Adrenal gland (tissue), 19 donors: ENCODE measurements at regions of chr3 and their contacts with region 1.

Region 1: GRCh38 chr3:190120269-190121060 is at the start of gene P3H2:
- DNase-seq: peak; percentile 88 to 94 (median 92)
- H3K4me3 ChIP-seq: peak within 1 kb of the TSS; percentile 9 to 94 (median 42)
- H3K27ac ChIP-seq: peak within 1 kb of the TSS; percentile 41 to 94 (median 88)
- H3K4me1 ChIP-seq: peaks cover 23 to 44% of the 10 kb centered on the region in 2 donors
- H3K27me3 ChIP-seq: no peaks in the 10 kb centered on the region
- CTCF ChIP-seq: peak; percentile 42 to 70 (median 56)
- POLR2A ChIP-seq: peak; percentile 63 to 90
- total RNA-seq, gene P3H2: 66.1 to 175 (median 97.0) TPM

Region 2: GRCh38 chr3:189961525-189962161 is 158.8 kb before region 1 on chr3:
- intact Hi-C with region 1: loop called in 1 of 2 experiments (anchors 10 kb)
- DNase-seq: peak; percentile 77 to 95 (median 82)
- H3K4me3 ChIP-seq: no peak overlapping the region
- H3K27ac ChIP-seq: peak overlapping the region in 2 of 5 donors; percentile 49 to 62
- H3K4me1 ChIP-seq: no peaks in the 10 kb centered on the region
- H3K27me3 ChIP-seq: no peaks in the 10 kb centered on the region
- CTCF ChIP-seq: peak; percentile 89 to 98 (median 96)
- POLR2A ChIP-seq: no peak

Region 3: GRCh38 chr3:190012314-190012782 is 108.1 kb before region 1 on chr3:
- intact Hi-C with region 1: loop called in 1 of 2 experiments (anchors 5 kb)
- DNase-seq: no peak
- H3K4me3 ChIP-seq: no peak overlapping the region
- H3K27ac ChIP-seq: peak overlapping the region in 3 of 5 donors; percentile 38 to 68 (median 65)
- H3K4me1 ChIP-seq: peaks cover 5 to 14% of the 10 kb centered on the region in 2 donors
- H3K27me3 ChIP-seq: no peaks in the 10 kb centered on the region
- CTCF ChIP-seq: no peak
- POLR2A ChIP-seq: no peak

Region 4: GRCh38 chr3:190197346-190197763 is 76.9 kb after region 1 on chr3:
- intact Hi-C with region 1: loop called (anchors 5 to 10 kb)
- DNase-seq: no peak
- H3K4me3 ChIP-seq: no peak overlapping the region
- H3K27ac ChIP-seq: no peak overlapping the region
- H3K4me1 ChIP-seq: peaks cover 0 to 3% of the 10 kb centered on the region in 2 donors
- H3K27me3 ChIP-seq: no peaks in the 10 kb centered on the region
- CTCF ChIP-seq: no peak
- POLR2A ChIP-seq: no peak

Region 5: GRCh38 chr3:190205739-190206138 is 85.3 kb after region 1 on chr3:
- intact Hi-C with region 1: loop called in 1 of 2 experiments (anchors 10 kb)
- DNase-seq: no peak
- H3K4me3 ChIP-seq: no peak overlapping the region
- H3K27ac ChIP-seq: no peak overlapping the region
- H3K4me1 ChIP-seq: peaks cover 0 to 3% of the 10 kb centered on the region in 2 donors
- H3K27me3 ChIP-seq: no peaks in the 10 kb centered on the region
- CTCF ChIP-seq: no peak
- POLR2A ChIP-seq: no peak